ENCODE measurements at regions of chr21 and their contacts with region 1.

Region 1: GRCh38 chr21:36989699-36990507 is 16.6 kb upstream of the RIPPLY3 start:
- DNase-seq: peak; percentile 95
- H3K4me3 ChIP-seq: peak overlapping the region; percentile 51 to 67 (median 60)
- H3K27ac ChIP-seq: peak overlapping the region; percentile 91 to 98 (median 94)
- H3K4me1 ChIP-seq: peaks cover 0 to 13% (median 5%) of the 10 kb centered on the region in 4 donors
- H3K27me3 ChIP-seq: peaks cover 6% of the 10 kb centered on the region
- CTCF ChIP-seq: peak; percentile 32 to 91 (median 88)
- EP300 ChIP-seq: no peak
- POLR2A ChIP-seq: peak; percentile 36

Region 2: DNA sequence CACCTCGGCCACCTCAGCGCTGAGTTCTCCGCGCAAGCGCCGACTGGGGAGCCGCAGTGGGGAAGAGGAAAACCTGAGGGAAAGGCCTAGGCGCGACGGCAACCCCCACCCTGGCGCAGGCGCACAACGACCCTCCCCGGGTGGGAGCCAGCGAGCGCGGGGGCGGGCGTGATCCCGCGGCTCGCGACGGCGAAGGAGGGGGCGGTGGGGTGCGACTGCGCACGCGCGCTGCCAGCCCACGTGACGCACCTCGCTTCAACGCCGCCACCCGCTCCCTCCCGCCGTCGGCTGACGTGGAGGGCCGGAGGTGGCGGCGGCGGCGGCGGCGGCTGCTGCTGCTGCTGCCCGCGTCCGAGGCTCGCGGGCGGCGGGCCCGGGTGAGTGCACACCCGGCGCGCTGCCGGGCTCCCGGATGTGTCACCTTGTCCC is 83.1 kb after region 1 on chr21 and contains the starts of genes PIGP and TTC3:
- in situ Hi-C with region 1: loop called in 2 of 4 experiments (anchors 10 to 25 kb)
- intact Hi-C with region 1: loop called (anchors 2 kb)
- DNase-seq: peak; percentile 95
- H3K4me3 ChIP-seq: peak within 1 kb of the TSS; percentile 76 to 93 (median 80)
- H3K27ac ChIP-seq: peak within 1 kb of the TSS; percentile 97 to 99 (median 98)
- H3K4me1 ChIP-seq: peaks cover 14 to 28% (median 24%) of the 10 kb centered on the region in 4 donors
- H3K27me3 ChIP-seq: no peaks in the 10 kb centered on the region
- CTCF ChIP-seq: no peak
- EP300 ChIP-seq: no peak
- POLR2A ChIP-seq: peak; percentile 82
- total RNA-seq, gene PIGP: 0.80 to 10.2 (median 7.6) TPM
- total RNA-seq, gene TTC3: 84.0 to 247 (median 146) TPM

Region 3: DNA sequence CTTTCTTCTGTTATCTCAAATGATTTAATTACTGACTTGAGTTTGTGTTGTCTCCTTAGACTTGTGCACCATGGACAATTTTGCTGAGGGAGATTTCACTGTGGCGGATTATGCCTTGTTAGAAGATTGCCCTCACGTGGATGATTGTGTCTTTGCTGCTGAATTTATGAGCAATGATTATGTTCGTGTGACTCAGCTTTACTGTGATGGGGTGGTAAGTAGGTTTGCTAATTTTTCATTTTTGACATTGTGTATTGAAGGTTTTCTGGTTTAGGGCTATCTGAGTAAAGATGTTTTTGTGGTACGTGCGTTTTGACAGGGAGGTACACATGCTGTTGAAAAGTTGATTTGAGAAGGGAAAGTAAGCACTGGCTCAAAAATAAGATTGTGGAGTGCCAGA is 97.3 kb after region 1 on chr21:
- in situ Hi-C with region 1: loop called in 1 of 4 experiments (anchors 25 kb)
- intact Hi-C with region 1: no loop called
- DNase-seq: no peak
- H3K4me3 ChIP-seq: no peak overlapping the region
- H3K27ac ChIP-seq: no peak overlapping the region
- H3K4me1 ChIP-seq: peaks cover 7 to 24% (median 16%) of the 10 kb centered on the region in 4 donors
- H3K27me3 ChIP-seq: no peaks in the 10 kb centered on the region
- CTCF ChIP-seq: peak; percentile 23 to 49 (median 34)
- EP300 ChIP-seq: no peak
- POLR2A ChIP-seq: no peak

Region 4: GRCh38 chr21:37563641-37564340 is 573.9 kb after region 1 on chr21:
- in situ Hi-C with region 1: loop called in 1 of 4 experiments (anchors 25 kb)
- intact Hi-C with region 1: no loop called
- DNase-seq: peak; percentile 94
- H3K4me3 ChIP-seq: peak overlapping the region; percentile 67 to 92 (median 76)
- H3K27ac ChIP-seq: peak overlapping the region; percentile 91
- H3K4me1 ChIP-seq: peaks cover 5 to 22% (median 11%) of the 10 kb centered on the region in 4 donors
- H3K27me3 ChIP-seq: no peaks in the 10 kb centered on the region
- CTCF ChIP-seq: peak; percentile 26 to 57 (median 37)
- EP300 ChIP-seq: no peak
- POLR2A ChIP-seq: peak; percentile 66